ENCODE measurements at regions of chr1 and their contacts with region 1.

Region 1: DNA sequence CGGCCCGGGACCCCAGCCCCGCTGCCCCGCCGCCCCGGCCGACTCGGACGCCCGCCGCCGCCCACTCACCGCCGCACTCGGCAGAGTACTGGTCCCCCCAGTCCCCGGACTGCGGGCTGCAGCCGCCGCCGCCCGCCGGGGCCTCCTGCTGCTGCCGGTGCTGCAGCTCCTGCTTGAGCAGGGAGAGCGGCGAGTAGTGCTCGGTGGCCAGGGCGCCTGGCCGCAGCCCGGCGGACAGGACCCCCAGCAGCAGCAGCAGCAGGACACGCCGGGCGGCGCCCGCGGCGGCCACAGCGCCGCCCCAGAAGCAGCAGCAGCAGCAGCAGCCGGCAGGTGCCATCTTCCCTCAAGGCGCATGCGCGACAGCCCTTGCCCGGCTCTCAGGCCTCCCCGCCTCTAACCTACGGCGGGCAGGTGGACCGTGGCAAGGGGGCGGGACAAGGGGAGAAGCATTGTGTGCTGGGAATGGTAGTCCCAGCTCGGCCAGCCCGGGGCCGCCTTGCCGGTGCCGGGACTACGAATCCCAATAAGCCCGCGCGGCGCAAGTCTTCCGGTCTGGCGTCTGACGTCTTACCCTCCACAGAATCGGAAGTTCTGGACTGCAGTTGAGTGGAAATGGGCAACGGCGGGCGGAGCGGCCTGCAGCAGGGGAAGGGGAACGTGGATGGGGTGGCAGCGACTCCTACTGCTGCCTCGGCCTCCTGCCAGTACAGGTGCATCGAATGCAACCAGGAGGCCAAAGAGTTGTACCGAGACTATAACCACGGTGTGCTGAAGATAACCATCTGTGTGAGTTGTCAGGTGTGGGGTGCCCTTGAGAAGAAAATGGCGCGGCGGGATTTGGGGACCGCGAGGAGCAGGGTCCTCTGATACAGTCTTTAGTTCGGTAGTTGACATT is at the starts of genes ARV1 and TTC13:
- DNase-seq: peak; percentile 83 to 98 (median 93)
- ATAC-seq: peak; percentile 97
- H3K4me3 ChIP-seq: peak within 1 kb of the TSS; percentile 71
- H3K4me3 Mint-ChIP-seq: peak within 1 kb of the TSS in 9 of 10 donors; percentile 83 to 100 (median 98)
- H3K27ac ChIP-seq: peak within 1 kb of the TSS; percentile 82
- H3K27ac Mint-ChIP-seq: peak within 1 kb of the TSS; percentile 92 to 99 (median 96)
- H3K4me1 ChIP-seq: peaks cover 34 to 39% of the 10 kb centered on the region in 2 donors
- H3K4me1 Mint-ChIP-seq: peaks cover 34 to 52% (median 43%) of the 10 kb centered on the region in 7 donors
- H3K27me3 ChIP-seq: no peaks in the 10 kb centered on the region
- H3K27me3 Mint-ChIP-seq: no peaks in the 10 kb centered on the region
- total RNA-seq, gene ARV1: 5.6 to 15.2 (median 11.5) TPM
- total RNA-seq, gene TTC13: 31.8 to 54.6 (median 45.1) TPM

Region 2: DNA sequence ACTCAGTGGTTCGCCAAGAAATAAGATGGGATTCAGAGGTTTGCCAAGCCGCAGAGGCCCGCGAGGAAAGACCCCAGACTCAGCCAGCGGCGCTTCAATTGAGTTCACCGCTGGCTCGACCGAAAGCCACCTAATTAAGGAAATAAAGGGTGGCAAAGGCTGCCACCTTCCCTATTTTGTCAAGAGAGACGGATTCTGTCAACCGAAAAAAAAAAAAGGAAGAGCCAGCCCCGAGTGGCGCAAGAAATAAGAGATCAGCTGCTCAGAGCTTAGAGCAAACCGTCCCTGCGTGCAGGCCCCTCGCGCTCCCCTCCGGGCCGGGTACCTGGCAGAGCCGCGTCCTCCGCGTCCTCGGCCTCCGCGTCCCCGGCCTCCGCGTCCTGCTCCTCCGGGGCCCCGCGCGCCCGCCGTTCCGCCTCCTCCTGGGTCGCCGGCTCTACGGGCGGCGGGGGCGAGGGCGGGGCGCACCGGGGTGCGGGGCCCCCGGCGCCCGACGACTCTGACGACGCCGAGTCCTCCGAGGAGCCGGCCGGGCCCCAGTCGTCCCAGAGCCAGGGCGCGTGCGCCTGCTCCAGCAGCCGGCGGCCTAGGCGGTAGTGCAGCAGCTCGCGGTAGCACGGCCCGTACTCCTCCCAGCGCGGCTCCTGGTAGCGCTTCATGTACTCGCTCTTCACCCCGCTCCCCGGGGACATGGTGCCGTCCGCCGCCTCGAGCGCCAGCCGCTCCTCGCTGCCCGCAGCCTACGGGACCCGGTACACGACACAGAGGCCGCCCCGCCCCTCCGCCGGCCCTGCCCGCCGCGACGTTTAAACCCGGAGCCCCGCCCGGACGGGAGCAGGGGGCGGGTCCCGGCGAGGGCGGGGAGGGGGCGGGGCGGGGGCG is 1636.7 kb before region 1 on chr1:
- CTCF ChIA-PET with region 1: no interaction called
- POLR2A ChIA-PET with region 1: interaction called, 3 read pairs
- intact Hi-C with region 1: loop called (anchors 10 kb)
- DNase-seq: peak; percentile 78 to 87 (median 84)
- ATAC-seq: peak; percentile 92
- H3K4me3 ChIP-seq: peak overlapping the region; percentile 87
- H3K4me3 Mint-ChIP-seq: peak overlapping the region; percentile 88 to 96 (median 93)
- H3K27ac ChIP-seq: peak overlapping the region; percentile 88
- H3K27ac Mint-ChIP-seq: peak overlapping the region; percentile 72 to 93 (median 89)
- H3K4me1 ChIP-seq: peaks cover 5 to 7% of the 10 kb centered on the region in 2 donors
- H3K4me1 Mint-ChIP-seq: peaks cover 32 to 59% (median 49%) of the 10 kb centered on the region in 7 donors
- H3K27me3 ChIP-seq: no peaks in the 10 kb centered on the region
- H3K27me3 Mint-ChIP-seq: peaks cover 0 to 23% (median 7%) of the 10 kb centered on the region in 5 donors

Region 3: DNA sequence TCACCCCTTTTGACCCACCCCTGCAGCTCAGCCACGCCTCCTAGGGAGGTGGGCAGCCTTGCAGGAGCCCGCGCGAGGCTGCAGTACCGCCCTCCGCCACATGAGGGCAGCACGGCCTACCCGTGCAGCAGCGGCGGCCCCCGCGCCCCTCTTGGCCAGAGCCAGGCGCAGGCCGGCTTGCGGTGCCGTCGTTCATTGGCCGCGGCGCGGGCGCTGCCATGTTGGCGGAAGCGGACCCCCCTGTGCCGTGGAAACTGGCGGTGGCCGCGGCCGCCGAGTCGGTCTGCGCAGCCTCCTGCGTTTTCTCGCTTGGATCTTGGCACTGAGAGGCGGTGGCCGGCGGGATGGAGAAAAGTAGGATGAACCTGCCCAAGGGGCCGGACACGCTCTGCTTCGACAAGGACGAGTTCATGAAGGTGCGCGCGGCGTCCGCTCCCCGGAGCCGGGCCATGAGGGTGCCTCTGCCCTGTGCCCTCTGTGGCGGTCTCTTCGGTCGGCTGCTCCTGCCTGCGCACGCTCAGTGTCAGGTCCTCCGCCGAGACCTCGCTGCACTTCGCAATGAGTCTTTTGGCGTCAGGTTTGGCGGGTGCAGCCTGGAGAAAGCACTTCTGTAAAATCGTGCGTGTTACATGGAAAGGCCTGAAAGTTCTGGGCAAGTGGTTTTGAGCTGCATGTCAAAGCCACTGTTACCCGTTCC is 336.3 kb before region 1 on chr1 and contains the start of gene COG2:
- CTCF ChIA-PET with region 1: interaction called, 3 read pairs
- POLR2A ChIA-PET with region 1: no interaction called
- intact Hi-C with region 1: loop called (anchors 1 kb)
- DNase-seq: peak; percentile 84 to 100 (median 91)
- ATAC-seq: peak; percentile 99
- H3K4me3 ChIP-seq: peak within 1 kb of the TSS; percentile 56
- H3K4me3 Mint-ChIP-seq: peak within 1 kb of the TSS; percentile 90 to 100 (median 96)
- H3K27ac ChIP-seq: peak within 1 kb of the TSS; percentile 76
- H3K27ac Mint-ChIP-seq: peak within 1 kb of the TSS; percentile 81 to 98 (median 93)
- H3K4me1 ChIP-seq: peaks cover 20 to 24% of the 10 kb centered on the region in 2 donors
- H3K4me1 Mint-ChIP-seq: peaks cover 36 to 56% (median 48%) of the 10 kb centered on the region in 7 donors
- H3K27me3 ChIP-seq: peaks cover 0 to 7% of the 10 kb centered on the region in 2 donors
- H3K27me3 Mint-ChIP-seq: peaks cover 0 to 24% (median 12%) of the 10 kb centered on the region in 5 donors
- total RNA-seq, gene COG2: 21.6 to 47.5 (median 34.7) TPM

Region 4: DNA sequence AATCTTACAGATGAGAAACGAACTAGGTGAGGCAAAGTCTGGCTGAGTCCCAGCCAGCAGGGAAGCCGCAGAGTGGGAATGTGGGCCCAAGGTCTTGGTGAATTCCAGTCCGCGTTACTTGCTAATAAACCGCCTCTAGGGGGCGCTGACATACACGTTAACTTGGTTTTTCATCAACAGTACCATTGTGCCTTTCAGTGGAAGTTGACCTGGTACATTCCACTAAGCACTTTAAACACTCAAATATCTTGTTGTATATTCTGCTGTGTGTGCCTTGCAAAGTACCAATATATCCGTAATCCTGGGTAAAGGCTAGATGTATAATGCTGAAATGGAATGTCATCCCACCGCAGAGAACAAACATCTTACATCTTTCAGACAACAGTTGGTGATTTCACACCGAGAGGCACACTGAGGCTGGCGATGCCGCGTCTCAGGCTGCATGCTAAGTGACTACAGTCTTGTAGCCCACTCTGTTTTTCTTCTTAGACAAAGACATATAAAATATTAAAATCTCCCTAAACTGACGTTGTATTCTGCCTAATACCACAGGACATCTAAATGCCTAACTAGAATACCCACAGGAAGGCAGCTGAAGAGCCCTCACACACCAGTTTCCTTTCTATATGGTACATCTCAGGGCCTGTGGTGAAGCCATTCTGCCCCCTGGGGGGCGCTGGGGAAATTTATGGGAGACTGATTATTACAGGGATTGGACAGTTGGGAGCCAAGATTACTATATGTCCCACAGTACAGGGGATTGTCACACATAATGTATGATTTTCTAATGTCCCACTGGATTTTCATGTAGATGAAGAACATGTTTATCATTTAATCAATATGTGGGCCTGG is 61.2 kb before region 1 on chr1:
- CTCF ChIA-PET with region 1: interaction called, 10 read pairs
- POLR2A ChIA-PET with region 1: no interaction called
- intact Hi-C with region 1: loop called (anchors 1 kb)
- DNase-seq: peak; percentile 33 to 74 (median 67)
- ATAC-seq: peak; percentile 81
- H3K4me3 ChIP-seq: no peak overlapping the region
- H3K4me3 Mint-ChIP-seq: no peak overlapping the region
- H3K27ac ChIP-seq: no peak overlapping the region
- H3K27ac Mint-ChIP-seq: peak overlapping the region in 5 of 9 donors; percentile 17 to 32 (median 24)
- H3K4me1 ChIP-seq: no peaks in the 10 kb centered on the region
- H3K4me1 Mint-ChIP-seq: peaks cover 0 to 11% (median 0%) of the 10 kb centered on the region in 7 donors
- H3K27me3 ChIP-seq: no peaks in the 10 kb centered on the region
- H3K27me3 Mint-ChIP-seq: no peaks in the 10 kb centered on the region

Region 5: GRCh38 chr1:231040019-231040799 is 61.5 kb after region 1 on chr1 and contains the start of gene FAM89A:
- CTCF ChIA-PET with region 1: interaction called, 3 read pairs
- POLR2A ChIA-PET with region 1: interaction called, 12 read pairs
- intact Hi-C with region 1: loop called (anchors 1 kb)
- DNase-seq: peak; percentile 44 to 79 (median 70)
- ATAC-seq: peak; percentile 91
- H3K4me3 ChIP-seq: peak within 1 kb of the TSS; percentile 67
- H3K4me3 Mint-ChIP-seq: peak within 1 kb of the TSS; percentile 81 to 90 (median 82)
- H3K27ac ChIP-seq: peak within 1 kb of the TSS; percentile 63
- H3K27ac Mint-ChIP-seq: peak within 1 kb of the TSS in 8 of 9 donors; percentile 36 to 83 (median 69)
- H3K4me1 ChIP-seq: peaks cover 10 to 13% of the 10 kb centered on the region in 2 donors
- H3K4me1 Mint-ChIP-seq: peaks cover 27 to 49% (median 36%) of the 10 kb centered on the region in 7 donors
- H3K27me3 ChIP-seq: no peaks in the 10 kb centered on the region
- H3K27me3 Mint-ChIP-seq: peaks cover 0 to 37% (median 0%) of the 10 kb centered on the region in 5 donors
- total RNA-seq, gene FAM89A: 4.5 to 9.0 (median 6.9) TPM

Region 6: GRCh38 chr1:231337472-231338269 is 358.9 kb after region 1 on chr1 and contains the start of gene EXOC8:
- CTCF ChIA-PET with region 1: no interaction called
- POLR2A ChIA-PET with region 1: no interaction called
- intact Hi-C with region 1: loop called (anchors 1 kb)
- DNase-seq: peak; percentile 95 to 100 (median 98)
- ATAC-seq: peak; percentile 86
- H3K4me3 ChIP-seq: peak within 1 kb of the TSS; percentile 99
- H3K4me3 Mint-ChIP-seq: peak within 1 kb of the TSS; percentile 97 to 100 (median 99)
- H3K27ac ChIP-seq: peak within 1 kb of the TSS; percentile 94
- H3K27ac Mint-ChIP-seq: peak within 1 kb of the TSS; percentile 96 to 100 (median 100)
- H3K4me1 ChIP-seq: peaks cover 41 to 51% of the 10 kb centered on the region in 2 donors
- H3K4me1 Mint-ChIP-seq: peaks cover 36 to 83% (median 67%) of the 10 kb centered on the region in 7 donors
- H3K27me3 ChIP-seq: no peaks in the 10 kb centered on the region
- H3K27me3 Mint-ChIP-seq: peaks cover 0 to 6% (median 0%) of the 10 kb centered on the region in 5 donors
- total RNA-seq, gene EXOC8: 21.9 to 33.8 (median 28.0) TPM

Region 7: DNA sequence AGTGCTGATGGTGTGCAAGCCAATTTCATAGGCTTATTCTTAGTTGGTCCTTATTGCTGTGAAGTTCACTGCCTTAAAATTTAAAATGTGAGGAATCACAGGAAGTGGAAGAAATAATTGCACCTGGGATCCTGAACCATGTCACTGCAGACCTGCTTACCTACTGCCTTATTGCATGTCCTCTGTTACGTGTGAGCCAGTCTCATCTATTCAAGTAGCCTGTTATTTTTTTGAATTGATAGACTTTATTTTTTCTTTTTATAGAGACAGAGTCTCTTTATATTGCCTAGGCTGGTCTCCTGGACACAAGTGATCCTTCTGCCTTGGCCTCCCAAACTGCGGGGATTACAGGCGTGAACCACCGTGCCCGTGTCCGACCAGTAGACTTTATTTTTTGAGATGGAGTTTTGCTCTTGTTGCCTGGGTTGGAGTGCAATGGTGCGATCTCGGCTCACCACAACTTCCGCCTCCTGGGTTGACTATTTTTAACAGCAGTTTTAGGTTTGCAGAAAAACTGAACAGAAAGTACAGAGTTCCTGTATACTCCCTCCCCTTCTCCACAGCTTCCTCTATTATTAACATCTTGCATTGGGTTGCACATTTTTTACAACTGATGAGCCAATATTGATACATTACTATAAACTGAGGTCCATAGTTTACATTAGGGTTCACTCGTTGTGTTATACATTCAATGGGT is 633.8 kb after region 1 on chr1:
- CTCF ChIA-PET with region 1: no interaction called
- POLR2A ChIA-PET with region 1: no interaction called
- intact Hi-C with region 1: loop called in 1 of 2 experiments (anchors 5 kb)
- DNase-seq: peak; percentile 20 to 79 (median 67)
- ATAC-seq: peak; percentile 96
- H3K4me3 ChIP-seq: peak overlapping the region; percentile 34
- H3K4me3 Mint-ChIP-seq: peak overlapping the region; percentile 56 to 82 (median 74)
- H3K27ac ChIP-seq: peak overlapping the region; percentile 59
- H3K27ac Mint-ChIP-seq: peak overlapping the region; percentile 79 to 94 (median 90)
- H3K4me1 ChIP-seq: peaks cover 41 to 45% of the 10 kb centered on the region in 2 donors
- H3K4me1 Mint-ChIP-seq: peaks cover 53 to 70% (median 63%) of the 10 kb centered on the region in 7 donors
- H3K27me3 ChIP-seq: no peaks in the 10 kb centered on the region
- H3K27me3 Mint-ChIP-seq: peaks cover 0 to 14% (median 0%) of the 10 kb centered on the region in 5 donors

Measured in naive thymus-derived CD4-positive, alpha-beta T cell (primary cell).